B cell (primary cell): ENCODE measurements at regions of chr2 and their contacts with region 1.

Region 1: GRCh38 chr2:118003396-118003824 is 10.5 kb downstream of the CCDC93 start:
- DNase-seq: peak; percentile 86
- ATAC-seq: peak; percentile 94
- H3K4me3 ChIP-seq: no peak overlapping the region
- H3K4me3 Mint-ChIP-seq: no peak overlapping the region
- H3K27ac ChIP-seq: peak overlapping the region in 1 of 2 donors; percentile 15
- H3K27ac Mint-ChIP-seq: peak overlapping the region; percentile 73
- H3K4me1 ChIP-seq: peaks cover 7 to 8% of the 10 kb centered on the region in 2 donors
- H3K4me1 Mint-ChIP-seq: peaks cover 7% of the 10 kb centered on the region
- H3K27me3 ChIP-seq: no peaks in the 10 kb centered on the region
- H3K27me3 Mint-ChIP-seq: no peaks in the 10 kb centered on the region
- CTCF ChIP-seq: peak; percentile 91

Region 2: GRCh38 chr2:117656546-117656945 is 346.9 kb before region 1 on chr2:
- CTCF ChIA-PET with region 1: no interaction called
- POLR2A ChIA-PET with region 1: no interaction called
- intact Hi-C with region 1: no loop called
- DNase-seq: no peak
- ATAC-seq: no peak
- H3K4me3 ChIP-seq: no peak overlapping the region
- H3K4me3 Mint-ChIP-seq: no peak overlapping the region
- H3K27ac ChIP-seq: no peak overlapping the region
- H3K27ac Mint-ChIP-seq: no peak overlapping the region
- H3K4me1 ChIP-seq: no peaks in the 10 kb centered on the region
- H3K4me1 Mint-ChIP-seq: no peaks in the 10 kb centered on the region
- H3K27me3 ChIP-seq: no peaks in the 10 kb centered on the region
- H3K27me3 Mint-ChIP-seq: no peaks in the 10 kb centered on the region
- CTCF ChIP-seq: no peak

Region 3: GRCh38 chr2:117835990-117836760 is 167.2 kb before region 1 on chr2:
- CTCF ChIA-PET with region 1: interaction called, 5 read pairs
- POLR2A ChIA-PET with region 1: no interaction called
- intact Hi-C with region 1: loop called (anchors 1 kb)
- DNase-seq: peak; percentile 76
- ATAC-seq: peak; percentile 78
- H3K4me3 ChIP-seq: peak overlapping the region in 3 of 5 experiments; percentile 12 to 35 (median 19)
- H3K4me3 Mint-ChIP-seq: peak overlapping the region; percentile 87
- H3K27ac ChIP-seq: no peak overlapping the region
- H3K27ac Mint-ChIP-seq: peak overlapping the region; percentile 34
- H3K4me1 ChIP-seq: peaks cover 7 to 15% of the 10 kb centered on the region in 2 donors
- H3K4me1 Mint-ChIP-seq: peaks cover 17% of the 10 kb centered on the region
- H3K27me3 ChIP-seq: peaks cover 0 to 7% (median 3%) of the 10 kb centered on the region in 4 experiments
- H3K27me3 Mint-ChIP-seq: peaks cover 6% of the 10 kb centered on the region
- CTCF ChIP-seq: peak; percentile 63

Region 4: DNA sequence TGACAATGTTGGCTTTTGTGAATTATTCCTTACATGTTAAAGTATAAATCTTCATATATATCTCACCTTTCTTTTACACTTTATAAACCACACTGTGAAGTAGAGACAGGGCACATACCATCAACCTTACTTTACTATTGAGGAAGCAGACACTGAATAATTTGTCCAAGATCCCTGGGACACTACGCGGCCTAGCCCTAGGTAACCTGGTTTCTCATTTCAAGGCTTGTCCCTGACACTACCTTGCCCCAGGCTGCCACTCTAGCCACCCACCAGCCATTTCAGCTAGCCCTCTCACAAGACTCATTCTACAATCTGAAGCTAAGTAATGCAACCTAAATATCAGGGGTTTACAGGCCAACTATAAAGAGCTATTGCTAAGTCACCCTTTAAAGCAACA is 16.3 kb before region 1 on chr2:
- CTCF ChIA-PET with region 1: interaction called, 35 read pairs
- POLR2A ChIA-PET with region 1: interaction called, 5 read pairs
- intact Hi-C with region 1: no loop called
- DNase-seq: no peak
- ATAC-seq: no peak
- H3K4me3 ChIP-seq: no peak overlapping the region
- H3K4me3 Mint-ChIP-seq: no peak overlapping the region
- H3K27ac ChIP-seq: no peak overlapping the region
- H3K27ac Mint-ChIP-seq: no peak overlapping the region
- H3K4me1 ChIP-seq: no peaks in the 10 kb centered on the region
- H3K4me1 Mint-ChIP-seq: no peaks in the 10 kb centered on the region
- H3K27me3 ChIP-seq: no peaks in the 10 kb centered on the region
- H3K27me3 Mint-ChIP-seq: no peaks in the 10 kb centered on the region
- CTCF ChIP-seq: no peak

Region 5: GRCh38 chr2:118013724-118014491 is 10.5 kb after region 1 on chr2 and contains the start of gene CCDC93:
- CTCF ChIA-PET with region 1: interaction called, 33 read pairs
- POLR2A ChIA-PET with region 1: interaction called, 6 read pairs
- intact Hi-C with region 1: loop called (anchors 1 kb)
- DNase-seq: peak; percentile 94
- ATAC-seq: peak; percentile 86
- H3K4me3 ChIP-seq: peak within 1 kb of the TSS; percentile 82 to 99 (median 96)
- H3K4me3 Mint-ChIP-seq: peak within 1 kb of the TSS; percentile 97
- H3K27ac ChIP-seq: peak within 1 kb of the TSS; percentile 90 to 97
- H3K27ac Mint-ChIP-seq: peak within 1 kb of the TSS; percentile 92
- H3K4me1 ChIP-seq: peaks cover 21 to 24% of the 10 kb centered on the region in 2 donors
- H3K4me1 Mint-ChIP-seq: peaks cover 34% of the 10 kb centered on the region
- H3K27me3 ChIP-seq: peaks cover 0 to 9% (median 0%) of the 10 kb centered on the region in 4 experiments
- H3K27me3 Mint-ChIP-seq: peaks cover 9% of the 10 kb centered on the region
- CTCF ChIP-seq: no peak
- total RNA-seq, gene CCDC93: 79.6 and 86.7 TPM in 2 replicates

Region 6: GRCh38 chr2:118061135-118061955 is 57.9 kb after region 1 on chr2:
- CTCF ChIA-PET with region 1: interaction called, 24 read pairs
- POLR2A ChIA-PET with region 1: no interaction called
- intact Hi-C with region 1: no loop called
- DNase-seq: peak; percentile 72
- ATAC-seq: peak; percentile 84
- H3K4me3 ChIP-seq: no peak overlapping the region
- H3K4me3 Mint-ChIP-seq: peak overlapping the region; percentile 10
- H3K27ac ChIP-seq: no peak overlapping the region
- H3K27ac Mint-ChIP-seq: peak overlapping the region; percentile 60
- H3K4me1 ChIP-seq: peaks cover 33 to 45% of the 10 kb centered on the region in 2 donors
- H3K4me1 Mint-ChIP-seq: peaks cover 43% of the 10 kb centered on the region
- H3K27me3 ChIP-seq: peaks cover 0 to 5% (median 0%) of the 10 kb centered on the region in 4 experiments
- H3K27me3 Mint-ChIP-seq: peaks cover 13% of the 10 kb centered on the region
- CTCF ChIP-seq: peak; percentile 79